Mammary epithelial cell (primary cell): ENCODE measurements at regions of chr9 and their contacts with region 1.

Region 1: DNA sequence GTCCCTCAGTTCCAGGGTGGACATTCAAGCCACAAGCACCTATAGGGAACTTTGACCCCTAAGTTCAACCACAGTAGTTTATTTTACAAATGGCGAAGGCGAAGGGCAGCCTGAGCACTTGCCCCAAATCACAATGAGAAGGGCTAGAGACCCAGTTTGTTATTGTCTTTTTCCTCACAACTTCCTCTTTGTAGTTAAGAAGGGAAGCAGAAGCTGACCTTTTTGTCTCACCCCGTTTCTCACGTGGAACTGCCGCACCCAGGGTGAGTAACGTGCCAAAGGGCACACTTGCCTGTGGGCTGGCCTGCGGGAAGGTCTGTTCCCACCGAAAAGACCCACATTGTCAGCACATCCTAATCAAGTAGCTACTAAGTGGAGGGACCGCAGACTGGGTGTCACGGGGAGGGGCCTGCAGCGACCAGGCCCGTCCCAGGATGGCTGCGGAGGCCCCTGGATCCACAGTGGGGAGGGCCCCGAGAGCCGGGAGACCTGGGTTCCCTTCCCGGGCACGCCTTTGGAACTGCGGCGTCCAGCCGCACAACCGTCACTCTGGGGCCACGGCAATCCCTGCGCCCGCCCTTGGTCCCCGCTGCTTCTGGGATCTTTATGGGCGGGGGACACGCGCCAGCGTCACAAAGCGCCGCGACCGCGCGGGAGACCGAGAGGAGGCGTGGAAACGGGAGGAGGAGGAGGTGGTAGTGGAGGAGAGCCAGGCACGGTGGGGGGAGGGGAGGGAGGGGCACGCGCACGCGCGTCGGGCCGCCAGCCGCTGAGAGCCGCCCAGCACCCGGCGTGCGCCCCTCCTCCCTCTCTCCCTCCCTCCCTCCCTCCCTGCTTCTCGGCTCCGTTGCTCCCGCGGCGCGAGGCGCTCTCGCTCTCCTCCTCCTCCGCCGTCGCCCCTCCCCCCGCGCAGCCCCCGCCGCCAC is at the start of gene UBE2R2:
- DNase-seq: peak; percentile 87
- H3K4me3 ChIP-seq: peak within 1 kb of the TSS; percentile 79 to 85 (median 81)
- H3K27ac ChIP-seq: peak within 1 kb of the TSS; percentile 88
- H3K4me1 ChIP-seq: peaks cover 36% of the 10 kb centered on the region
- H3K27me3 ChIP-seq: no peaks in the 10 kb centered on the region
- CTCF ChIP-seq: no peak
- total RNA-seq, gene UBE2R2: 14.8 to 38.0 TPM

Region 2: DNA sequence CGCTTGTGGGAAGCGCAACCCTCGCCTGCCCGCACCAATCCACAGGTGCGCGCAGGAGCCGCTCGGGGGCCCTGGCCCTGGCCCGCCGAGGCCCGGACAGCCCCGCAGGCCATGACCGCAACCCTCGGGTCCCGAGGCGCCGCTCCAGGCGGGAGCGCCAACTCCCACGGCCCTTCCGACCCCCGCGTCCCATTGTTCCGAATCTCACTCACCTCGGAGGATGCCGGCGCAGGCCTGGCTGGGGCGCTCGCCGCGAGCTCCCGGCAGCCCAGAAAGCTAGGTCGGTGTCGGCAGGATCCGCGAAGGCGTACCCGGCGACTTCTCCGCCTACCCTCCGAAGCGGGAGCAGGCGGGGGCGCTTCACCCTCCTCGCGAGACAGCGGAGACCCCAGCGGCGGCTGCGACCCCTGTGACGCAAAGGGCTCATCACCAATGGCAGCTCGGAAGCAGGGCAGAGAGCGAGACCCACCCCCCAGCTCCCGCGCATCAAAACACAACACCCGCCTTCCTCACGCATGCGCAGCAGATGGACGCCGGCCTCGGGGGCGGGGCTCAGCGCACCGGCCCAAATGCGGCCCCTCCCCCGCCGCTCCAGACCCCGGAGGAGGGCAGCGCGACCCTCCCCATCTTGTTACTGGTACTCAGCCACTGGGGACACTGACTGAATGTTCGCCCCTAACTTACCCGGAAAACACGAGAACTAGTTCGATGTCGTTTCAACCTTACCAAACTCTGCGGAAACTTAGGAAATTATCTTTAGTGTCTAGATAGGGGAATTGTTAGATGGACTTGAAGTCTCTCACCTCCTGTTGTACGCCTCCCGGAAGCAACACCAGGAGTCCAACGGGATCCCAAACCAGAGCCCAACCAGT is 1265.8 kb before region 1 on chr9:
- CTCF ChIA-PET with region 1: no interaction called
- dilution Hi-C with region 1: no loop called
- in situ Hi-C with region 1: no loop called
- intact Hi-C with region 1: no loop called
- DNase-seq: peak; percentile 77
- H3K4me3 ChIP-seq: peak overlapping the region; percentile 85 to 99 (median 91)
- H3K27ac ChIP-seq: peak overlapping the region; percentile 96
- H3K4me1 ChIP-seq: peaks cover 9% of the 10 kb centered on the region
- H3K27me3 ChIP-seq: no peaks in the 10 kb centered on the region
- CTCF ChIP-seq: peak in 1 of 2 donors; percentile 15

Region 3: DNA sequence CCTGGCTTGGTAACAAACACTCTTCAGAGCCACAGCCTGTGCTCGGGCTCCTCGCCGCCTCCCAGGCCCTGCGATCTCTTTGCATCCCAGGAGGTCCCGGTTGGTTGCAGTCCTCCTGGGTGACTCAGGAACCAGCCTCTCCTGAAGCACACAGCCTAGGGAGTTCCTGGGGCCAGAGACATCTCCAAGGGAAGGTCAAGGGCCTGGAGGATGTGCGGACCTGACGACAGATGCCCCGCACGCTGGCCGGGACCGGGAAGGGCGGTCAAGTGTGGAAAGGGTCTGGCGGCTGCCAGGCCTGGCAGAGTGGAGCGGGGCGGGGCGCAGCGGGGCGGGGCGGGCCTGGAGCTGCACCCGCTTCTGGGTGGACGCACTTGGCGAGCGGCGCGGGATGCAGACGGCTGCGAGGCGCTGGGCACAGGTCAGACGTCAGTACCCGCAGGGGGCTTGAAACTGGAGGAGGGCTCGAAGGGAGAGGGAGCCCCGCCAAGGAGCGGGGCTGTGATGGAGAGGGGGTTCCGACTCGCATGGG is 66.2 kb before region 1 on chr9:
- CTCF ChIA-PET with region 1: no interaction called
- dilution Hi-C with region 1: no loop called
- in situ Hi-C with region 1: no loop called
- intact Hi-C with region 1: loop called (anchors 5 kb)
- DNase-seq: no peak
- H3K4me3 ChIP-seq: peak overlapping the region; percentile 66 to 74 (median 68)
- H3K27ac ChIP-seq: no peak overlapping the region
- H3K4me1 ChIP-seq: peaks cover 17% of the 10 kb centered on the region
- H3K27me3 ChIP-seq: no peaks in the 10 kb centered on the region
- CTCF ChIP-seq: no peak

Region 4: GRCh38 chr9:33835625-33836260 is 19.2 kb after region 1 on chr9:
- CTCF ChIA-PET with region 1: interaction called, 3 read pairs
- dilution Hi-C with region 1: no loop called
- in situ Hi-C with region 1: no loop called
- intact Hi-C with region 1: loop called (anchors 1 kb)
- DNase-seq: no peak
- H3K4me3 ChIP-seq: no peak overlapping the region
- H3K27ac ChIP-seq: peak overlapping the region; percentile 27
- H3K4me1 ChIP-seq: peaks cover 12% of the 10 kb centered on the region
- H3K27me3 ChIP-seq: no peaks in the 10 kb centered on the region
- CTCF ChIP-seq: no peak

Region 5: DNA sequence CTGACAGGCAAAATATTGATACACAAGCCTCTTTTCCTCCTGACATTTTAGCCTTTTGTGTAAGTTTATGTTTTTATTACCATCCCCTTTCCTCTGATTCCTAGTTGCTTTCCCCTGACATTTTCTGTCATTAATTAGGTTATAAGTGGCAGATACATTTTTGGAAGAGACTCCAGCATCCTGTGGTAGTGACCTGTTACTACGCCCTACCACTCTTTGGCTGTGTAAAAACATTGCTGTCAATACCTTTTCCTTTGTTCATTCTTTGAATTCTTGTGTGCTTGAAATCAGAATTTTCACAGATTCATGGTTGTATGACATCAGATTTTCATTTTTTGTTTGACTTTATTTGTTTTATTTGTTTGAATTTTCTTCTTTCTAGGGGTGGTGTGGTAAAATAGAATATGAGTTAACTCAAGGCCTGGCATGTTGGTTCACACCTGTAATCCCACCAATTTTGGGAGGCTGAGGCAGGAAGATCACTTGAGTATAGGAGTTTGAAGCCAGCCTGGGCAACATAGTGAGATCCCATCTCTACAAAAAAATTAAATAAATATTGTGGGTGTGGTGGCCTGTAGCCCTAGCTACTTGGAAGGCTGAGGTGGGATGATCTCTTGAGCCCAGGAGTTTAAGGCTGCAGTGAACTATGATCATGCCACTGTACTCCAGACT is 43.7 kb after region 1 on chr9:
- CTCF ChIA-PET with region 1: interaction called, 15 read pairs
- dilution Hi-C with region 1: no loop called
- in situ Hi-C with region 1: no loop called
- intact Hi-C with region 1: no loop called
- DNase-seq: no peak
- H3K4me3 ChIP-seq: no peak overlapping the region
- H3K27ac ChIP-seq: no peak overlapping the region
- H3K4me1 ChIP-seq: no peaks in the 10 kb centered on the region
- H3K27me3 ChIP-seq: no peaks in the 10 kb centered on the region
- CTCF ChIP-seq: peak; percentile 8 to 48

Region 6: GRCh38 chr9:34001298-34001697 is 184.7 kb after region 1 on chr9:
- CTCF ChIA-PET with region 1: no interaction called
- dilution Hi-C with region 1: no loop called
- in situ Hi-C with region 1: no loop called
- intact Hi-C with region 1: no loop called
- DNase-seq: no peak
- H3K4me3 ChIP-seq: no peak overlapping the region
- H3K27ac ChIP-seq: no peak overlapping the region
- H3K4me1 ChIP-seq: no peaks in the 10 kb centered on the region
- H3K27me3 ChIP-seq: no peaks in the 10 kb centered on the region
- CTCF ChIP-seq: no peak

Region 7: GRCh38 chr9:34139477-34140146 is 323.0 kb after region 1 on chr9:
- CTCF ChIA-PET with region 1: no interaction called
- dilution Hi-C with region 1: no loop called
- in situ Hi-C with region 1: no loop called
- intact Hi-C with region 1: no loop called
- DNase-seq: peak; percentile 60
- H3K4me3 ChIP-seq: no peak overlapping the region
- H3K27ac ChIP-seq: no peak overlapping the region
- H3K4me1 ChIP-seq: no peaks in the 10 kb centered on the region
- H3K27me3 ChIP-seq: no peaks in the 10 kb centered on the region
- CTCF ChIP-seq: peak; percentile 29 to 47

Region 8: GRCh38 chr9:34279411-34279810 is 462.8 kb after region 1 on chr9:
- CTCF ChIA-PET with region 1: no interaction called
- dilution Hi-C with region 1: no loop called
- in situ Hi-C with region 1: no loop called
- intact Hi-C with region 1: no loop called
- DNase-seq: peak; percentile 13
- H3K4me3 ChIP-seq: no peak overlapping the region
- H3K27ac ChIP-seq: no peak overlapping the region
- H3K4me1 ChIP-seq: peaks cover 8% of the 10 kb centered on the region
- H3K27me3 ChIP-seq: no peaks in the 10 kb centered on the region
- CTCF ChIP-seq: no peak

Region 9: GRCh38 chr9:34994260-34994899 is 1177.8 kb after region 1 on chr9:
- CTCF ChIA-PET with region 1: interaction called, 24 read pairs
- dilution Hi-C with region 1: no loop called
- in situ Hi-C with region 1: no loop called
- intact Hi-C with region 1: no loop called
- DNase-seq: peak; percentile 43
- H3K4me3 ChIP-seq: no peak overlapping the region
- H3K27ac ChIP-seq: no peak overlapping the region
- H3K4me1 ChIP-seq: peaks cover 36% of the 10 kb centered on the region
- H3K27me3 ChIP-seq: no peaks in the 10 kb centered on the region
- CTCF ChIP-seq: peak; percentile 82